WTC11 (cell line): ENCODE measurements at regions of chr7 and their contacts with region 1.

Region 1: GRCh38 chr7:92447345-92448204 is at the start of gene GATAD1:
- DNase-seq: peak; percentile 90
- ATAC-seq: peak; percentile 91
- H3K4me3 Mint-ChIP-seq: peak within 1 kb of the TSS; percentile 77
- H3K27ac Mint-ChIP-seq: peak within 1 kb of the TSS; percentile 72
- H3K4me1 Mint-ChIP-seq: peaks cover 9% of the 10 kb centered on the region
- H3K27me3 Mint-ChIP-seq: no peaks in the 10 kb centered on the region
- CTCF ChIP-seq: peak; percentile 14
- total RNA-seq, gene GATAD1: 34.4 to 37.6 TPM (median 36.4 TPM) in 3 replicates

Region 2: GRCh38 chr7:92245487-92246362 is 201.8 kb before region 1 on chr7 and contains the starts of genes ANKIB1 and KRIT1:
- CTCF ChIA-PET with region 1: interaction called, 26 read pairs
- POLR2A ChIA-PET with region 1: interaction called, 13 read pairs
- DNase-seq: peak; percentile 84
- ATAC-seq: peak; percentile 80
- H3K4me3 Mint-ChIP-seq: peak within 1 kb of the TSS; percentile 90
- H3K27ac Mint-ChIP-seq: peak within 1 kb of the TSS; percentile 98
- H3K4me1 Mint-ChIP-seq: peaks cover 29% of the 10 kb centered on the region
- H3K27me3 Mint-ChIP-seq: no peaks in the 10 kb centered on the region
- CTCF ChIP-seq: no peak
- total RNA-seq, gene ANKIB1: 38.5 to 43.4 TPM (median 41.9 TPM) in 3 replicates
- total RNA-seq, gene KRIT1: 30.7 to 37.8 TPM (median 34.1 TPM) in 3 replicates

Region 3: GRCh38 chr7:92415225-92415624 is 32.4 kb before region 1 on chr7:
- CTCF ChIA-PET with region 1: interaction called, 17 read pairs
- POLR2A ChIA-PET with region 1: no interaction called
- DNase-seq: no peak
- ATAC-seq: no peak
- H3K4me3 Mint-ChIP-seq: no peak overlapping the region
- H3K27ac Mint-ChIP-seq: no peak overlapping the region
- H3K4me1 Mint-ChIP-seq: no peaks in the 10 kb centered on the region
- H3K27me3 Mint-ChIP-seq: no peaks in the 10 kb centered on the region
- CTCF ChIP-seq: no peak

Region 4: DNA sequence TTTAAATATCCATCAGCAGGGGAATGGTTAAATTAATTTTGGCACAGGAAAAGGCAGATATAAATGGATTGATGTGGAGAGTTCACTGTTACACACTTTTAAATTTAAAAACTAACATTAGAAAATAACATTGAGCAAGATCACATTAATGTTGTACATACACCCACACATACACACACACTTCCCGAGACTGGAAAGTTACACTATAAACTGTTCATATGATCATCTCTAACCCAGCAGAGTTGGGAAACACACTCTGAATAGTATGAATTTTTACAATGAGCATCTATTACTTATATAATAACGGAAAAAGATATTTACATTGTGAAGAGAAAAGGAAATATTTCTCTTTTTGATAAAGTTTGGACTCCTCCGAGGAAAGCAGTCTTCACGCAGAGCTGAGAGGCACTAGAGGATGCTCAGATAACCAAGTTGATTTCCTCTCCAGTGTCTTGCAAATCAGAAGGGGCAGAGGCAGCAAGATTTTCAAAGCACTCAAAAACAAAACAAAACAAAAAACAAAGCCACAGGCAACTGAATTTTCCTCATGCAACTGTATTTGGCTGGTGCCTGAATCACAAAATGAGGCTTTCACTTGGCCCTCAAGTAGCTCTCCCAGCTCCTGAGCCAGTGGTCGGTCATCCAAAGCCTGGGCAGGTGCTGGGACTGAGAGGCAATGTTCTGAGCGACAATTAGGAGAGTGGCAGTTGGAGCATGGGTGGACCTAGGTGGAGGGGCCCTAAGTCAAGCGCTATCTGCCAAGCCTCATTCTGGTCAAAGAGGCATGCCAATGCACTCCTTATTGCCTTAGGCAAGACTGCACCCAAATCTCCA is 10.7 kb before region 1 on chr7:
- CTCF ChIA-PET with region 1: interaction called, 34 read pairs
- POLR2A ChIA-PET with region 1: interaction called, 10 read pairs
- DNase-seq: no peak
- ATAC-seq: peak; percentile 68
- H3K4me3 Mint-ChIP-seq: peak overlapping the region; percentile 26; the same call in 1 of the 2 replicates
- H3K27ac Mint-ChIP-seq: peak overlapping the region; percentile 60; the same call in 1 of the 2 replicates
- H3K4me1 Mint-ChIP-seq: peaks cover 43% of the 10 kb centered on the region
- H3K27me3 Mint-ChIP-seq: no peaks in the 10 kb centered on the region
- CTCF ChIP-seq: no peak

Region 5: DNA sequence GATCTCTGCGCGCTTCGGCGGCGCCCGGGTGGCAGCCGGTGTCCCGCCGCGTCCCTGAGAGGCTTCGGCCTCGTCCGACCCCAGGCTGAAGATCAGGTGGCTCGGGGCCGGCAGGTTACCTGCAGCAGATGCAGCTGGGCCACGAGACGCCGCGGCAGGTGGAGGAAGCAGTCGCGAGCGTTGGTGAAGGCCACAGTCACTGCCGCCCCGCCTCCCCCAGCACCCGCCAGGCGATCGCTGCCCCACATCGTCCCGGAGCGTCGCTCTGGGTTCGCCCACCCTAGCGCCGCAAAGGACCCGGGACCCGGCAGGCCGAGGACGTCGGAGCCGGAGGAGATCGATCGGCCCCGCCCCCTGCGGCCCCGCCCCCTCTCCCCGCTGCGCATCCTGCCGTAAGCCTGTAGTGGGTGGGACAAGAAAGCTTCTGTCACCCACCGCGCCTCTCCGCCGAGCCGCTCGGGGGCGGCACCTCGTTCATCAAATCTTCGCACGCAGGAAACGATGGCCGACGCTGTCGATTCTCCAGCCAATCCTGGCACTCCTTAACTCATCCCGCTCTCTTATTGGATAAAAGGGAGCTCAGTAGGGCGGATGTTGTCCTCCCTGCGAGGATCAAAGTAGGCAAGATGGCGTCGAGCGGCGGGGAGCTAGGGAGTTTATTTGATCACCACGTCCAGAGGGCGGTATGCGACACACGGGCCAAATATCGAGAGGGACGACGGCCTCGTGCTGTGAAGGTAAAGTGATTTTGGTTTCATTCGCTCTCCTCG is 80.8 kb after region 1 on chr7 and contains the starts of genes PEX1 and RBM48:
- CTCF ChIA-PET with region 1: interaction called, 12 read pairs
- POLR2A ChIA-PET with region 1: no interaction called
- DNase-seq: peak; percentile 97
- ATAC-seq: peak; percentile 96
- H3K4me3 Mint-ChIP-seq: peak within 1 kb of the TSS; percentile 91
- H3K27ac Mint-ChIP-seq: peak within 1 kb of the TSS; percentile 96
- H3K4me1 Mint-ChIP-seq: peaks cover 18% of the 10 kb centered on the region
- H3K27me3 Mint-ChIP-seq: no peaks in the 10 kb centered on the region
- CTCF ChIP-seq: no peak; the same call in 1 of the 2 replicates
- total RNA-seq, gene PEX1: 24.1 to 25.4 TPM (median 24.9 TPM) in 3 replicates
- total RNA-seq, gene RBM48: 8.0 to 8.6 TPM (median 8.4 TPM) in 3 replicates